Activated B cell treated with CpG ODN at 0.5 μM for 24 hours (primary cell): ENCODE measurements at regions of chr18 and their contacts with region 1.

Region 1: GRCh38 chr18:23250893-23251656 is 115.8 kb downstream of the CABLES1 start:
- DNase-seq: no peak
- ATAC-seq: no peak
- H3K4me3 Mint-ChIP-seq: no peak overlapping the region
- H3K27ac Mint-ChIP-seq: no peak overlapping the region
- H3K4me1 Mint-ChIP-seq: peaks cover 2% of the 10 kb centered on the region
- H3K27me3 Mint-ChIP-seq: no peaks in the 10 kb centered on the region
- CTCF ChIP-seq: no peak

Region 2: DNA sequence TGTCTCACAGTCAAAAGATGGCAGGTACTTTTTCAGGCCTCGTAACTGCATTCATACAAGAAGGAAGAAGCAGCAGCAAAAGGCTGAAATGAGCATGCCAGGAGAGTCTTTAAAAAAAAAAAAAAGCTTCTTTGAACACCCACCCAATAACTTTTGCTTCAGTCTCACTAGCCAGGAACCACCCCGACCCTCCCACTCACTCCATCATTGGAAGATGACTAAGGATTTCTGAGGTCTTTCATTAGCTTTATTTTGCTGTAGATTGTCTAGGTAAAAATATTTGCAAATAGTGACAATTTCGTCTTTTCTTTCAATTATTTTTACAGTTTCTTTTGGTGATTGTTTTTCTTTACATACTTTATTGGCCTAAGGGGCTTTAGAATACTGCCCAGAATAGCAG is 280.0 kb before region 1 on chr18:
- CTCF ChIA-PET with region 1: no interaction called
- POLR2A ChIA-PET with region 1: no interaction called
- intact Hi-C with region 1: no loop called
- DNase-seq: no peak
- ATAC-seq: no peak
- H3K4me3 Mint-ChIP-seq: no peak overlapping the region
- H3K27ac Mint-ChIP-seq: no peak overlapping the region
- H3K4me1 Mint-ChIP-seq: peaks cover 7% of the 10 kb centered on the region
- H3K27me3 Mint-ChIP-seq: no peaks in the 10 kb centered on the region
- CTCF ChIP-seq: no peak

Region 3: GRCh38 chr18:23291456-23292205 is 40.6 kb after region 1 on chr18:
- CTCF ChIA-PET with region 1: no interaction called
- POLR2A ChIA-PET with region 1: no interaction called
- intact Hi-C with region 1: loop called (anchors 5 kb)
- DNase-seq: no peak
- ATAC-seq: peak; percentile 25
- H3K4me3 Mint-ChIP-seq: no peak overlapping the region
- H3K27ac Mint-ChIP-seq: no peak overlapping the region
- H3K4me1 Mint-ChIP-seq: peaks cover 2% of the 10 kb centered on the region
- H3K27me3 Mint-ChIP-seq: no peaks in the 10 kb centered on the region
- CTCF ChIP-seq: no peak